ENCODE measurements at regions of chr3 and their contacts with region 1.

Region 1: DNA sequence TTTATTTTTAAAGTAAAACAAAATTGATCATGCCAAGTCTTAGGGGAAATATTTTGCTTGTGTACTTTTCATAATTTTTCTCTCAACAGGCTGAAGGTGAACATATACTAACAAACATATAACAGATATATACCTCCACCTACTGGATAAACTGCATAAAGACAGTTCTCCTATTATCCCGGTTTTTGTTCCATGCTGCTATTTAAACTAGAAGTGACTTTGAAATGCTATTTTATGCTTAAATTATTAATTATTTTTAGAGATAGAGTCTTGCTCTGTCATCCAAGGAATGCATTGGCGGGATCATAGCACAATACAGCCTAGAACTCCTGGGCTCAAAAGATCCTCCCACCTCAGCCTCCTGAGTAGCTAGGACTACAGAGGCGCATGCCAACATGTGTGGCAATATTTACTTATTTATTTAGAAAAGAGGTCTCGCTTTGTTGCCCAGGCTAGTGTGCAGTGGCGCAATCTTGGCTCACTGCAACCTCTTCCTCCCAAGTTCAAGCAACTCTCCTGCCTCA is 49.8 kb downstream of the ST3GAL6 start:
- DNase-seq: no peak
- H3K4me3 ChIP-seq: no peak overlapping the region
- CTCF ChIP-seq: no peak
- POLR2A ChIP-seq: no peak

Region 2: GRCh38 chr3:98058244-98058960 is 754.5 kb before region 1 on chr3:
- intact Hi-C with region 1: loop called (anchors 5 kb)
- DNase-seq: no peak
- H3K4me3 ChIP-seq: no peak overlapping the region
- CTCF ChIP-seq: no peak
- POLR2A ChIP-seq: no peak

Region 3: GRCh38 chr3:98602078-98602678 is 210.7 kb before region 1 on chr3:
- intact Hi-C with region 1: loop called (anchors 5 kb)
- DNase-seq: no peak
- H3K4me3 ChIP-seq: no peak overlapping the region
- CTCF ChIP-seq: no peak
- POLR2A ChIP-seq: no peak

Region 4: DNA sequence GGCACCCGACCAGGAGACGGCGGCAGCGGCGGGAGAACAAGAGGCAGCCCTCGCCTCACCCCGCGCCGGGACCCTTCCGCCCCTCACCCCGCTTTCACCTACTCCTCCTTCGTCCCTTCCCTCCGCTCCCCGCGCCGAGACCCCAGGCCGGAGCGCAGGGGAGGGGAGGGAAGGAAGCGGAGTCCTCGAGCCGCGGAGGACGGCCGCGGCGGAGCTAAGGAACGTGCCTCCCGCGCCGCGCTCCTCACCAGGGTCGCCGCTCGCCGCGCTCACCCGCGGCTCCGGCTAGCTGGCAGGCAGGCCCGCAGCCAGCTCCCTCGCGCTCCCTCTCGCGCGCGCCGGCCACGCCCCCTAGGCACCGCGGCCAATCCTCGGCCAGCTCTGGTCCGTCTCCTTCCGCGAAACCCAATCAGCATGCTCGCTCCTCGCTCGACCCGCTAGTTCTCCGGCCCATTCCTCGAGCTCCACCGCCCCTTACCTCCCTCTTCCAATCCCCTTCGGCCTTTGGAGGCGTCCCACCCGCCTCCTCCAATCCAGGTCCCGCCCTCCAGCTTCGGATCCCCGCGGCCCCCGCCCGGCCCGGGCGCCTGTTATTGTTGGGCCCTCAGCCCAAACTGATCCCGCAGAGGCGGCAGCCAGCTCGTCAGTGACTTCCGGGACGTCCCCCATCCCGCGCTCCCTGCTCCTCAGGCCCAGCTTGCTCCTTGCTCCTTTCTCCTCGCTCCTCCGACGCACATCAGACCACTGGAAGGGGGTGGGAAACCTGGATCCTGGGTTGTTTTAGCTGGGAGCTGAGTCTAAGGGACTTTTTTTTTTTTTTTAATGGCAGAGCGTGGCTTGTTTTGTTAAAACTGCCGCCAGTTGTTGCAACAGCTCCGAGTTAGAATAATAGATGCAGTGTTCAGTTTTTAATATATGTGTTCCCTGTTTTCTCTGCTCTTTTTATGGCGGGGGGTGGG is 88.8 kb after region 1 on chr3 and contains the start of gene DCBLD2:
- intact Hi-C with region 1: no loop called
- DNase-seq: peak; percentile 98 to 99
- H3K4me3 ChIP-seq: peak within 1 kb of the TSS; percentile 90
- CTCF ChIP-seq: no peak
- POLR2A ChIP-seq: peak in 1 of 2 donors; percentile 19
- total RNA-seq, gene DCBLD2: 13.8 to 22.8 (median 15.3) TPM

Region 5: GRCh38 chr3:98994128-98994762 is 181.3 kb after region 1 on chr3:
- intact Hi-C with region 1: loop called (anchors 2 kb)
- DNase-seq: no peak
- H3K4me3 ChIP-seq: no peak overlapping the region
- CTCF ChIP-seq: peak in 1 of 3 donors; percentile 48
- POLR2A ChIP-seq: no peak